HEK293T (cell line): ENCODE measurements at regions of chr17 and their contacts with region 1.

Region 1: DNA sequence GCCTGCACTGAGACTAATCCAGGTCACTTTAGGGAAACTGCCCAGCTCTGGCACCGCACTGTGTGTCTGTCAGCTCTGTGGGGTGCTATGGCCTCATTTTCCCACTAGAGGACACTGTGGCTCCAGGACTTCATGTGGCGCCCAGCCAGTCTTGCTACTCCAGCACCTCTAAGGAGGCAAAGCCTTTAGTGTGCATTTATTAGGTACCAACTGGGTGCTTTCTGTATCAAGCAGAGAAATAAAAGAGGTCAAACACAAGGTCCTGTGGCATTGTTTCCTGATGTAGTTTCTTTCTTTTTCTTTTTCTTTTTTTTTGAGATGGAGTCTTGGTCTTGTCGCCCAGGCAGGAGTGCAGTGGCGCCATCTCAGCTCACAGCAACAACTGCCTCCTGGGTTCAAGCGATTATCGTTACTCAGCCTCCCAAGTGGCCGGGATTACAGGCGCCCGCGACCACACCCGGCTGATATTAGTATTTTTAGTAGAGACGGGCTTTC is 12.5 kb upstream of the RHBDL3 start:
- DNase-seq: peak; percentile 72

Region 2: DNA sequence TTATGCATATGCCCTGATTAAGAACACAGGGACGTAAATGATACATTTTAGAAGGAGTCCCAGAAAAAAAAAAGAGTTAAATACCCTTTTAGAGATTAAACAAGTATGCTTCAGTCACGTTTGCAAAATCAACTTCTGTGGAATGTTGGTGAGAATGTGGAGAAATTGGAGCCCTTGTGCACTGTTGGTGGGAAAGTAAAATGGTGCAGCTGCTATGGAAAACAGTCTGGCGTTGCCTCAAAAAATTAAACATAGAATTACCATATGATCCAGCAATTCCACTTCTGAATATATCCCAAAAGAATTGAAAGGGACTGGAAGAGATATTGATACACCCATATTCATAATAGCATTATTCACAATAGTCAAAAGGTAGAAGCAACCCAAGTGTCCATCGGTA is 38.9 kb after region 1 on chr17:
- CTCF ChIA-PET with region 1: no interaction called
- POLR2A ChIA-PET with region 1: no interaction called
- DNase-seq: no peak

Region 3: DNA sequence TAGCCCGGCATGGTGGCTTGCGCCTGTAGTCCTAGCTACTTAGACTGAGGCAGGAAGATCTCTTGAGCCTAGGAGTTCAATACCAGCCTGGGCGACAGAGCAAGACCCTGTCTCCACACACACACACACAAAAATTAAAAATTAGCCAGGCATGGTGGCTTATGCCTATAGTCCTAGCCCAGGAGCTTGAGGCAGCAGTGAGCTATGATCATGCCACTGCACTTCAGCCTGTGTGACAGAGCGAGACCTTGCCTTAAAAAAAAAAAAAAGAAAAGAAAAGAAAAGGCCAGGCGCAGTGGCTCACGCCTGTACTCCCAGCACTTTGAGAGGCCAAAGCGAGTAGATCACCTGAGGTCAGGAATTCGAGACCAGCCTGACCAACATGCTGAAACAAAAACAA is 64.9 kb after region 1 on chr17:
- CTCF ChIA-PET with region 1: interaction called, 14 read pairs
- POLR2A ChIA-PET with region 1: interaction called, 3 read pairs
- DNase-seq: no peak

Region 4: DNA sequence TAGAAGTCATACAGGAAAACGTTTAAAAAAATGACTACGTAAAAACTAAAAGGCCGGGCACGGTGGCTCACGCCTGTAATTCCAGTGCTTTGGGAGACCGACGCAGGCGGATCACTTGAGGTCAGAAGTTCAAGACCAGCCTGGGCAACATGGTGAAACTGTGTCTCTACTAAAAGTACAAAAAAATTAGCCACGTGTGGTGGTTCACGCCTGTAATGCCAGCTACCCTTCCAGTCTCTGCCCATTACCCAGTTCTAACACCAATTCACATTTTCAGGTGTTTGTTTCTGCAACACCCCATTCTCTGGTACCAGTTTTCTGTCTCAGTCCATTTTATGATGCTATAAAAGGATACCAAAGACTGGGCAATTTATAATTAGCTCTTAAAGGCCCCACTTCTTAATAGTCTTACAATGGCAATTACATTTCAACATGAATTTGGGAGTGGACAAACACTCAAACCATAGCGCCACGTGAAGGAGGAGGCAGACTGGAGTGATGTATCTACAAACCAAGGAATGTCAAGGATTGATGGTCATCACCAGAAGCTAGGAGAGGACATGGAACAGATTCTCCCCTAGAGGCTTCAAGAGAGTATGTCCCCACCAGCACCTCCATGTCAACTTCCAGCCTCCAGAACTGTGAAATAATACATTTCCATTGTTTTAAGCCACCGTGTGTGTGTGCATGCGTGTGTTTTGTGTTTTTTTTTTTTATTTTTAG is 89.6 kb after region 1 on chr17:
- CTCF ChIA-PET with region 1: no interaction called
- POLR2A ChIA-PET with region 1: no interaction called
- DNase-seq: no peak

Region 5: GRCh38 chr17:32813021-32813420 is 559.9 kb after region 1 on chr17:
- CTCF ChIA-PET with region 1: interaction called, 11 read pairs
- POLR2A ChIA-PET with region 1: no interaction called
- DNase-seq: no peak